Adrenal gland (tissue), 19 donors: ENCODE measurements at regions of chr20 and their contacts with region 1.

Region 1: DNA sequence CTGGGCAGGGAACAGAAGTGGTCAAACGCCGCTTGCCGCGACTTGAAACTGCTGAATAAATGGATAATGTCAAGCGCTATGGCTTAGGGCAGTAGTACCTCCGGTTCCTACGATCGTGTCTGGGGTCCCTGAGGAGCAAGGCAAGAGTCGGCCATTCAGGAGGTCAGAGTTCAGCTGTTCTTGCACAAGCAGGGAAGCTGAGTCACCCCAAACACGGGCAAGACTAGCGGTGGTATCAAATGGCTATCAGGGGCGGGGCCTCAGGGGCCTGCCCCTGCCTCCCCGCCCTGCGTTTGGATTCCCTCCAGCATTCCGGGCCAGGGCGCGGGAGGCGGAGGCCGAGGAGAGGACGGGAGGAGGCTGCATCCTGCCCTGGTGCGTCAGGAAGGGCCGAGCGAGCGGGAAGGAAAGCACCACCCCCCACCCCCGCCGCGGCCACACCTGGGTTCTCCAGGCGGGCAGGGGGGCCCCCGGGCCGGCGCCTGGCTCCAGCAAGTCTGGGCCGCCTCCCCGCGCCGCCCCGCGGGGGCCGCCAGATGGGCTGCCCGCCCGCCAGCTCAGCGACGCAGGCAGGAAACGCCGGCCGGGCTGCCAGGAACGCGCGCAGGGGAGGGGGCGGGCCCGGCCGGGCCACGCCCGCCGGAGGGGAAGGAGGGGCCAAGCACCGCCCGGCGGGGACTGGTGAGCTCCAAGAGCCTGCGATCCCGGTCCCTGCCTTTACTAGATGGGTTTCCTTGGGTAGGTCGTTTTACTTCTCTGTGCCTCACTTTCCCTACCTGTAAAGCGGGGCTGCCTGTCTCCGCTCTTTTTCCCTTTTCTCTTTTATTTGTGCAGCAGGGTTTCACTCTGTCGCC is 32.2 kb upstream of the ID1 start:
- DNase-seq: peak; percentile 96 to 99 (median 98)
- H3K4me3 ChIP-seq: peak overlapping the region in 2 of 4 donors; percentile 35 to 49
- H3K27ac ChIP-seq: peak overlapping the region; percentile 64 to 95 (median 93)
- H3K4me1 ChIP-seq: peaks cover 13 to 24% of the 10 kb centered on the region in 2 donors
- H3K27me3 ChIP-seq: no peaks in the 10 kb centered on the region
- CTCF ChIP-seq: peak in 1 of 6 experiments; percentile 15
- POLR2A ChIP-seq: peak; percentile 93 to 95

Region 2: GRCh38 chr20:31605031-31605901 is 32.3 kb after region 1 on chr20 and contains the start of gene ID1:
- intact Hi-C with region 1: loop called in 1 of 2 experiments (anchors 5 kb)
- DNase-seq: peak; percentile 90 to 98 (median 94)
- H3K4me3 ChIP-seq: peak within 1 kb of the TSS in 3 of 4 donors; percentile 12 to 64 (median 31)
- H3K27ac ChIP-seq: peak within 1 kb of the TSS in 4 of 5 donors; percentile 71 to 90 (median 78)
- H3K4me1 ChIP-seq: peaks cover 0 to 22% of the 10 kb centered on the region in 2 donors
- H3K27me3 ChIP-seq: no peaks in the 10 kb centered on the region
- CTCF ChIP-seq: peak in 1 of 6 experiments; percentile 17
- POLR2A ChIP-seq: peak; percentile 84 to 95
- total RNA-seq, gene ID1: 40.9 to 468 (median 110) TPM

Region 3: GRCh38 chr20:31723319-31724078 is 150.6 kb after region 1 on chr20:
- intact Hi-C with region 1: loop called in 1 of 2 experiments (anchors 5 kb)
- DNase-seq: peak; percentile 97 to 99 (median 98)
- H3K4me3 ChIP-seq: peak overlapping the region; percentile 49 to 86 (median 74)
- H3K27ac ChIP-seq: peak overlapping the region; percentile 96 to 99 (median 97)
- H3K4me1 ChIP-seq: peaks cover 27 to 37% of the 10 kb centered on the region in 2 donors
- H3K27me3 ChIP-seq: no peaks in the 10 kb centered on the region
- CTCF ChIP-seq: peak; percentile 97 to 99 (median 99)
- POLR2A ChIP-seq: peak; percentile 43 to 51

Region 4: DNA sequence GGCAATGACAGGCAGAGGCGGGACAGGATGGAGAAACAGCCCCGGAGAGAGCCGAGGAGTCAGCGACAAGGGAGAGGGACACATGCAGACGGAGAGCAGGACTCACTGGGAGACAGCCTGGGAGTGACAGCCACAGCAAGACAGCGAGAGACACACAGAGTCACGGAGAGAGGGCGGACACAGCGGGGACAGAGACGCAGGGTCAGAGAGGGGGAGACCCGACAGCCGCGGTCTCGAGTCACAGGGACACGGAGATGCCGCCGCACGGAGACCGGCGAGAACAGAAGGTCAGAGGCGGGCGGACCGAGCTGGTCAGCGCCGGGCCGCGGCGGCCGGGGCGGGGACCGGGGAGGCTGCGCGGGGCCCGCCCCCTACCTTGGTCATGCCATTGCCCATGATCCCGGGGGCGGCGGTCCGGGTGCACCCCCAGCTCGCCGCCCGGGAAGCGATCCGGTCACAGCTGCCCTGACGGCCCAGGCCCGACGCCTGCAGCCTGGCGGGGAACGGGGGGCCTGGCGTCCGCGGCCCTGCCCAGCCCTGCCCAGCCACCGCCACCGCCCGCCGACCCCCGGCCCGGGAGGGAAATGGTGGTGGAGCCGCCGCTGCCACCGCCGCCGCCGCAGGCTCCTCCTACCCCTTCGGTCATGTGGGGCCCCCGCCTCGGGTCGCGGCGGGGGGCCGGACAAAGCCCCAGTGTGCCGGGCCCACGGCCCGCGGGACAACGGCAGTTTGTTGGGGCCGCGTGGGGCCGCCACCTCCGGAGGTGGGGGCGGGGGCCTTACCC is 297.2 kb after region 1 on chr20 and contains the starts of genes DUSP15 and TTLL9:
- intact Hi-C with region 1: no loop called
- DNase-seq: peak; percentile 40 to 70 (median 62)
- H3K4me3 ChIP-seq: peak within 1 kb of the TSS; percentile 28 to 97 (median 68)
- H3K27ac ChIP-seq: peak within 1 kb of the TSS in 3 of 5 donors; percentile 64 to 82 (median 72)
- H3K4me1 ChIP-seq: peaks cover 8 to 14% of the 10 kb centered on the region in 2 donors
- H3K27me3 ChIP-seq: no peaks in the 10 kb centered on the region
- CTCF ChIP-seq: no peak
- POLR2A ChIP-seq: peak in 1 of 2 donors; percentile 10
- total RNA-seq, gene DUSP15: 2.6 to 16.1 (median 5.7) TPM
- total RNA-seq, gene TTLL9: 0.14 to 0.33 (median 0.20) TPM in 4 of 9 donors, not detected in the others